Posterior vena cava (tissue), 2 donors: ENCODE measurements at regions of chr11 and their contacts with region 1.

Region 1: DNA sequence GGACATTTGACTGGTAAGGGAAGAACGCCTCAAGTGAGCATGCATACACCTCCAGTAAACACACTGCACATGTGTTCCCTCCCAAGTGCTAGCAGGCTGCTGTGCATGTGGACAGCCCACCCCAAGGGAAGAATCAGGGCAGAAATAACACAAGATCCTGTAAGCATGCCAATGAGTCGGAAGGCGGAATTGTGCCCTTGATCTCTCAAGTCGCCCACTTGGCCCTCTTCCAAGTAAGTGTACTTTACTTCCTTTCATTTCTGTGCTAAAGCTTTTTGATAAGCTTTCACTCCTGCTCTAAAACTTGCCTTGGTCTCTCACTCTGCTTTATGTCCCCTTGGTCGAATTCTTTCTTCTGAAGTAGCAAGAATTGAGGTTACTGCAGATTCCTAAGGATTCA is 139.6 kb downstream of the TRPC6 start:
- DNase-seq: no peak

Region 2: DNA sequence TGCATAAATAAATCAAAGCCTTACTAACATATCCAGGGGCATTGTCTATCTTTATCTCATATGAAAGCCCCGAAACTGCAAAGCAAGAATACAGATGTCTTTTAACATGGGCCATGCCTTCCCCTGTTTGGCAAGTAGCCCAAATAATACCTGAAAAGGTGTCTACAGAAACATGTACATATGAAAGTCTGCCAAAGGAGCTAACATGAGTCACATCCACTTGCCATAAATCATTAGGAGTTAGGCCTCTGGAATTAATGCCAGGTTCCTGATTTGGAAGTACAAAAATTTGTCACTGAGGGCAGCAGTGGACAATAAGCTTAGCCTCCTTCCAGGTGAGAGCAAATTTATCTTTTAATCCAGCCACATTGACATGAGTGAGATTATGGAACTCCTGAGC is 229.1 kb before region 1 on chr11:
- intact Hi-C with region 1: no loop called
- DNase-seq: no peak

Region 3: GRCh38 chr11:101508370-101508769 is 64.2 kb after region 1 on chr11:
- intact Hi-C with region 1: no loop called
- DNase-seq: no peak

Region 4: GRCh38 chr11:101848262-101848661 is 404.1 kb after region 1 on chr11:
- intact Hi-C with region 1: loop called in 1 of 2 experiments (anchors 10 kb)
- DNase-seq: no peak

Region 5: GRCh38 chr11:102451681-102452460 is 1007.7 kb after region 1 on chr11:
- intact Hi-C with region 1: no loop called
- DNase-seq: peak; percentile 87